HCT116 (cell line): ENCODE measurements at regions of chr13 and their contacts with region 1.

Region 1: GRCh38 chr13:51112771-51113170 is 1.7 kb upstream of the C13orf42 start:
- DNase-seq: no peak
- ATAC-seq: no peak
- H3K4me3 ChIP-seq: no peak overlapping the region
- H3K27ac ChIP-seq: no peak overlapping the region
- H3K4me1 ChIP-seq: no peaks in the 10 kb centered on the region
- H3K27me3 ChIP-seq: 0 out of 2 replicates have a peak, but pooled peaks cover 8% of the 10 kb centered on the region
- CTCF ChIP-seq: no peak
- POLR2A ChIP-seq: no peak
- RAD21 ChIP-seq: no peak

Region 2: GRCh38 chr13:50928659-50929462 is 183.9 kb before region 1 on chr13:
- CTCF ChIA-PET with region 1: no interaction called
- POLR2A ChIA-PET with region 1: no interaction called
- RAD21 ChIA-PET with region 1: no interaction called
- intact Hi-C with region 1: no loop called
- DNase-seq: no peak
- ATAC-seq: no peak
- H3K4me3 ChIP-seq: no peak overlapping the region
- H3K27ac ChIP-seq: no peak overlapping the region
- H3K4me1 ChIP-seq: no peaks in the 10 kb centered on the region
- H3K27me3 ChIP-seq: no peaks in the 10 kb centered on the region
- CTCF ChIP-seq: no peak
- POLR2A ChIP-seq: no peak
- RAD21 ChIP-seq: no peak

Region 3: DNA sequence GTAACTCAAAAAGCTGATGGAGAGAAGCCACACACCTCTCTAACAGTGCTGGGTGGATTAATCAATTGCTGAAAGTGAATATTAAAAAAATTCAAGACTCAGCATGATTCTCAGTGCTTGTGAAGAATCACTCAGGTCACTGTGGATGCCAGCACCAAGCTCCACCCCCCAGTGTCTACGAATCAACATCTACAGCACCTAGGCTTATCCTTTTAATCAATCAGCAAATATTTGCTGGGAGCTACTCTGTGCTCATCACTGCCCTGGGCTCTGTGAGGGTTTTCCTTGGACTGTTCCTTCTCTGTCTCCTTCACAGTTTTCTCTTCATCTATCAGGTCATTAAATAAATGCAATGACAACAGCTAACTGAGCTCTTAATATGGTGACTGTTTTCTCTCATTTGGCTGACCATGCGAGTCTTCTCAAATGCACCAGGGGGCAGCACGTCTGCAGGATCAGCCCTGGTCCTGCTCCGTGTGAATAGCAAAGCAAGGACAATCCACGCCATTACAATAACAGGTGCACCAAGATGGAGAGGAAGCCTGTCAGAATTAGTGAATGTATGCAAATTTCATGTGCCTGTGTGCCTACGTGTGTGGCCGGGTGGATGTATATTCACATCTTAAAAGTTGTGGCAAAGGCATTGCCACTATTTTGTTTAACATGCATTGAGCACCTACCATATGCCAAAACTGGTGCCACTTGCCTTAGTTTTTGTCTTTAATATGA is 12.9 kb after region 1 on chr13:
- CTCF ChIA-PET with region 1: interaction called, 16 read pairs
- POLR2A ChIA-PET with region 1: no interaction called
- RAD21 ChIA-PET with region 1: no interaction called
- intact Hi-C with region 1: no loop called
- DNase-seq: peak; percentile 60
- ATAC-seq: peak; percentile 96
- H3K4me3 ChIP-seq: no peak overlapping the region
- H3K27ac ChIP-seq: no peak overlapping the region
- H3K4me1 ChIP-seq: peaks cover 4 to 8% of the 10 kb centered on the region in 2 experiments; a peak in 2 of 4 replicates
- H3K27me3 ChIP-seq: no peaks in the 10 kb centered on the region
- CTCF ChIP-seq: peak; percentile 82 to 96 (median 87)
- POLR2A ChIP-seq: no peak
- RAD21 ChIP-seq: peak; percentile 86